ENCODE measurements at regions of chr12 and their contacts with region 1.

Region 1: DNA sequence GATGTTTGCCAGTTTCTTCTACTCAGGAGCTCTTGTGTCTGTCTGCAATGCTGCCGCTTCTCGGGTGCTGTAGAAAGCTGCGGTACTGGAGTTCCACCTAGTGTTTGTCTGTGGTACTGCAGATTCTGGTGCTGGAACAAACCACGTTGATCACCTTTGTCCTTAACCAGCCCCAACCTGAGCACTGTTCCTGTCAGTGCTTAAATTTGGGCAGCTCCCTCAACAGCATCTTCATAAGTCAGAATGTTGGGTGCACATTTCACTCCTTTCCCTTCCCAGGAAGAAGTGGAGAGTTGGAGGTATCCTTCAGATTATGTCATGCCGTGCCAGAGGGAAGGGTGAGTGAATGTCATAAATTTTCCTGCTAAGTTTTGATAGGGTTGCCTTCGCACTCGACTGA is 48.7 kb upstream of the LALBA start:
- DNase-seq: peak; percentile 73
- CTCF ChIP-seq: peak; percentile 94

Region 2: GRCh38 chr12:48183091-48183875 is 435.3 kb before region 1 on chr12 and contains the start of gene CCDC184:
- in situ Hi-C with region 1: loop called (anchors 25 kb)
- DNase-seq: peak; percentile 85
- CTCF ChIP-seq: peak; percentile 51

Region 3: DNA sequence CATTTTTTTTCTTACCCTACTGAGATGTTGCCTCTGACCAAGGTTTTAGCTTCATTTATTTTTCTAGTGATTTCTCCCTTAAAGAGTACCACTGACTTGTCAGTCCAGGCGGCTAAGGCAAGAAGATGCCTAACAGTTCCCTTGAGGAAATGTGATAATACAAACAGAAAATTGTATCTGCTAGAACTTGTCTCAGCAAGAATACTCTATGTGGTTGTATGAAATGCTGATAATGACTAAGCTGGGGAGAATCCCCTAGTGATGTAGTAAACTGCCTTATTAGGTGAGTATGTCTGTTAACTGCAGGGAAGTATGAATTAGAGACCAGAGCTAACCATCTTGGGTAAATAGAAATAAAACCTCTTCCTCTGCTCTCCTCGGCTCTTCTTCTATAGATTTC is 129.5 kb before region 1 on chr12:
- in situ Hi-C with region 1: no loop called
- DNase-seq: peak; percentile 62
- CTCF ChIP-seq: no peak

Region 4: DNA sequence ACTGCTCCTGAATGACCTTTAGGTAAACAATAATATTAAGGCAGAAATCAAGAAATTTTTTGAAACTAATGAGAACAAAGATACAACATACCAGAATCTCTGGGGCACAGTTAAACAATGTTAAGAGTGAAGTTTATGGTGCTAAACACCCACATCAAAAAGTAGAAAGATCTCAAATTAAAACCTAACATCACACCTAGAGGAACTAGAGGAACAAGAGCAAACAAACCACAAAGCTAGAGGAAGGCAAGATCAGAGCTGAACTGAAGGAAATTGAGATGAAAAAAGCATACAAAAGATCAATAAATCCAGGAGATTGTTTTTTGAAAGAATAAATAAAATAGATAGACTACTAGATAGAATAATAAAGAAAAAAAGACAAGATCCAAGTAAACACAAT is 85.9 kb before region 1 on chr12:
- in situ Hi-C with region 1: loop called (anchors 10 kb)
- DNase-seq: no peak
- CTCF ChIP-seq: no peak

Region 5: GRCh38 chr12:49161092-49161795 is 542.7 kb after region 1 on chr12:
- in situ Hi-C with region 1: no loop called
- DNase-seq: no peak
- CTCF ChIP-seq: no peak